Activated CD4-positive, alpha-beta memory T cell treated with anti-CD3 and anti-CD28 coated beads for 36 hours (primary cell): ENCODE measurements at regions of chr5 and their contacts with region 1.

Region 1: GRCh38 chr5:103258368-103258956 is at the start of gene MACIR:
- DNase-seq: peak; percentile 95
- H3K4me3 Mint-ChIP-seq: peak within 1 kb of the TSS; percentile 77
- H3K27ac Mint-ChIP-seq: no peak within 1 kb of the TSS
- H3K4me1 Mint-ChIP-seq: peaks cover 27% of the 10 kb centered on the region
- H3K27me3 Mint-ChIP-seq: peaks cover 6% of the 10 kb centered on the region
- total RNA-seq, gene MACIR: 6.6 to 7.4 TPM

Region 2: DNA sequence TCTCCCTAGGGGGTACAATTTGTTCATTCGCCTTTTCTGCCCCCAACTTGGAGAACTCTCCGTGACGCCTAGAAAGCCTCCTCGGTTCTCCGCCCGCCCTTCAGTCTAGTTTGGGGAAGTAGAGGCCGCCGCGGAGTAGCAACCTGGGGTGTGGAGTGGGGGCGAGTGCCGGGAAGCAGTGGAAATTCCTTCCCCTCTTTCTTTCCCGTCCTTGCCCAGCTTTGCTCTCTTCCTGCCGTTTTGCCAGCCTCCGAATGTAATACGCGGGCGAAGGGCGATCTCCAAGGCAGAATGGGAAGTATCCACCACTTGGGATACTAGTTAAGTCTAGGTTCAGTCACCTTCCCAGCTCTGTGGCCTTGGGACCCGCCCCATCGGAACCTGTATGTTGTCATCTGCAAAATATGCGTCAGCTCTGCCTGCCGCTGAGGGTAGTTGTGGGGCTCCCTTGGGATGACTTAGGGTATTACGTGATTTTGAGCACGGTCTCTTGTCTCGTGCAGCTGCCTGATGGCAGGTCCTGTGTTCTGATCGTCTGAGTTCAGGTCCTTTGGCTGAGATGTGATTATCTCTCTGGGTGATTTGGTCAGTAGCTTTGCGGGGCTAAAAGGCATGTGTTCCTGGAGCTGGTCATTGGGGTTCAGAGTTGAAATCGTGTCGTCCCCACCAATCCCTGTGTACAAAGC is 502.6 kb before region 1 on chr5:
- CTCF ChIA-PET with region 1: no interaction called
- POLR2A ChIA-PET with region 1: no interaction called
- intact Hi-C with region 1: loop called (anchors 2 kb)
- DNase-seq: peak; percentile 87
- H3K4me3 Mint-ChIP-seq: peak overlapping the region; percentile 91
- H3K27ac Mint-ChIP-seq: peak overlapping the region; percentile 93
- H3K4me1 Mint-ChIP-seq: peaks cover 40% of the 10 kb centered on the region
- H3K27me3 Mint-ChIP-seq: peaks cover 7% of the 10 kb centered on the region

Region 3: GRCh38 chr5:103119765-103120606 is 138.5 kb before region 1 on chr5 and contains the starts of genes GIN1 and PPIP5K2:
- CTCF ChIA-PET with region 1: no interaction called
- POLR2A ChIA-PET with region 1: interaction called, 9 read pairs
- intact Hi-C with region 1: loop called (anchors 1 kb)
- DNase-seq: peak; percentile 99
- H3K4me3 Mint-ChIP-seq: peak within 1 kb of the TSS; percentile 88
- H3K27ac Mint-ChIP-seq: peak within 1 kb of the TSS; percentile 99
- H3K4me1 Mint-ChIP-seq: peaks cover 40% of the 10 kb centered on the region
- H3K27me3 Mint-ChIP-seq: no peaks in the 10 kb centered on the region
- total RNA-seq, gene GIN1: 9.7 to 10.7 TPM
- total RNA-seq, gene PPIP5K2: 40.6 to 44.4 TPM

Region 4: GRCh38 chr5:103475629-103476240 is 217.3 kb after region 1 on chr5:
- CTCF ChIA-PET with region 1: interaction called, 13 read pairs
- POLR2A ChIA-PET with region 1: no interaction called
- intact Hi-C with region 1: no loop called
- DNase-seq: no peak
- H3K4me3 Mint-ChIP-seq: no peak overlapping the region
- H3K27ac Mint-ChIP-seq: no peak overlapping the region
- H3K4me1 Mint-ChIP-seq: no peaks in the 10 kb centered on the region
- H3K27me3 Mint-ChIP-seq: peaks cover 11% of the 10 kb centered on the region

Region 5: DNA sequence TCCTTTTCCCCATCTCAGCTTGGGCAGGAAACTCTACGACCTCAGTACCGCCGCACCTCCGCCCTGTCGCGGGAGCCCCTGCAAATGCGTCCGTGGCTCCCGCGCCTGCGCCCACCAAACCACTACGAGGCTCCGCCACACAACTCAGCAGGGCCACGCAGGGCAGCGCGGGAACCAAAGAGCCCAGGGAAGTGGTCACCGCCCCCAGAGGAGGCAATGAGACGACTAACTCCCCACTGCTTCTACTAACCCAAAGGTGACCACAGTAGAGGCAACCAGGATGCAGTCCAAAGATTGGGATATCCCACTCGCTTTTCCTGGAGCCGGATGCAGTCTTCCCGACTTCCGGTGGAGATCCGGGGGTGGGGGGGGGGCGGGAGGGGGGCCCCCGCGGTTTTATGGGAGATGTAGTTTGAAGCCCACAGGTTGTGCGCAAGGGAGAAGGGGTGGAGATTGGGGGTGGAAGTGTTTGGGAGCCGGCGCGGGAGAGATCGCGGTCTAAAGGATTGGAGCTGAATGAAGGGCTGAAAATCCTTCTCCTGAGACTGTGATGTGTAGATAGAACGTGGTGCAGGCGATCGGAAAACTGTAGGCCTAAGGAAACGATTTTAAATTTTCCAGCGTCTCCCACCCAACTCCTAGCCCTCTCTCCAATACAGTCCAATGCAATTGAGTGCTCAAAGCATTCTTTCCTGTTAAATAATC is 304.1 kb after region 1 on chr5 and contains the start of gene NUDT12:
- CTCF ChIA-PET with region 1: no interaction called
- POLR2A ChIA-PET with region 1: no interaction called
- intact Hi-C with region 1: loop called (anchors 10 kb)
- DNase-seq: peak; percentile 64
- H3K4me3 Mint-ChIP-seq: peak within 1 kb of the TSS; percentile 76
- H3K27ac Mint-ChIP-seq: peak within 1 kb of the TSS; percentile 55
- H3K4me1 Mint-ChIP-seq: peaks cover 12% of the 10 kb centered on the region
- H3K27me3 Mint-ChIP-seq: peaks cover 8% of the 10 kb centered on the region
- total RNA-seq, gene NUDT12: 2.1 to 2.7 TPM